MCF 10A (cell line): ENCODE measurements at regions of chr1 and their contacts with region 1.

Region 1: GRCh38 chr1:29202584-29203340 is 21.1 kb upstream of the SRSF4 start:
- DNase-seq: peak; percentile 98
- H3K4me3 Mint-ChIP-seq: no peak overlapping the region
- H3K27ac Mint-ChIP-seq: peak overlapping the region; percentile 46
- H3K4me1 Mint-ChIP-seq: peaks cover 7% of the 10 kb centered on the region
- H3K27me3 Mint-ChIP-seq: no peaks in the 10 kb centered on the region
- CTCF ChIP-seq: peak; percentile 85

Region 2: GRCh38 chr1:28886731-28887418 is 315.9 kb before region 1 on chr1:
- CTCF ChIA-PET with region 1: interaction called, 32 read pairs
- POLR2A ChIA-PET with region 1: interaction called, 5 read pairs
- intact Hi-C with region 1: loop called (anchors 1 kb)
- DNase-seq: peak; percentile 90
- H3K4me3 Mint-ChIP-seq: peak overlapping the region; percentile 95
- H3K27ac Mint-ChIP-seq: peak overlapping the region; percentile 89
- H3K4me1 Mint-ChIP-seq: peaks cover 40% of the 10 kb centered on the region
- H3K27me3 Mint-ChIP-seq: no peaks in the 10 kb centered on the region
- CTCF ChIP-seq: no peak

Region 3: GRCh38 chr1:29043274-29043965 is 159.3 kb before region 1 on chr1:
- CTCF ChIA-PET with region 1: interaction called, 10 read pairs
- POLR2A ChIA-PET with region 1: no interaction called
- intact Hi-C with region 1: no loop called
- DNase-seq: no peak
- H3K4me3 Mint-ChIP-seq: no peak overlapping the region
- H3K27ac Mint-ChIP-seq: peak overlapping the region; percentile 18
- H3K4me1 Mint-ChIP-seq: no peaks in the 10 kb centered on the region
- H3K27me3 Mint-ChIP-seq: no peaks in the 10 kb centered on the region
- CTCF ChIP-seq: no peak

Region 4: DNA sequence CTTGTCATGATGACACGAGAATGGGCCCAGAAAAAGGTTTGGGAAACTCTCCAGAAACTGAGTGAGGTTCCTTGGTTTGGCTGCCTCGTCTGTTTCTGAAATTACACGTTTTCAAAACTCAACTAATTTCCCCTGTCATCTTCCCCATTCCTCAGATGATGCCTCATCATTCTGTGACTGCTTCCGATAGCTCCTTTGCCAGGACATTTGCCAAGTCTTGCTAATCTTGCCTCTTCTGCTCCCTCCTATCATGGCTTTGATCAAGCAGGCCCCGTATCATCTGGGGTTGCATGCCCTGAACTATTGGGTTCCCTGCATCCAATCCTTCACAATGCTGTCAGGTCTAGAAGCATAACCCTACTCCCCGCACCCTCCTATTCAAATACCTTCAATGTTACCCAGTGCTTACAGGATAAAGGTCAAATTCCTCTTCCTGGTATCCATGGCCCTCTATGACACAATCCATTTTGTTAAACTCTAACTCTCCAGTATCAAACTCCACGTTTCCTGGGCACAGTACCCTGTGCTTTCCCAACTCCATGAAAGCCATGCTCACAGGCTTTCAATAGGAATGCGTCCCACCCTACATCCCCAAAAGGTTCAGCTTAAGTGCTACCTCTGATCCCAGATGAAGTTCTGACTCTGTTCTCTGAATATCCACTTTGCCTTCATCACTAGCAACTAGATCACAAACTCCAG is 56.9 kb before region 1 on chr1:
- CTCF ChIA-PET with region 1: no interaction called
- POLR2A ChIA-PET with region 1: no interaction called
- intact Hi-C with region 1: no loop called
- DNase-seq: peak; percentile 47
- H3K4me3 Mint-ChIP-seq: no peak overlapping the region
- H3K27ac Mint-ChIP-seq: no peak overlapping the region
- H3K4me1 Mint-ChIP-seq: no peaks in the 10 kb centered on the region
- H3K27me3 Mint-ChIP-seq: no peaks in the 10 kb centered on the region
- CTCF ChIP-seq: no peak

Region 5: DNA sequence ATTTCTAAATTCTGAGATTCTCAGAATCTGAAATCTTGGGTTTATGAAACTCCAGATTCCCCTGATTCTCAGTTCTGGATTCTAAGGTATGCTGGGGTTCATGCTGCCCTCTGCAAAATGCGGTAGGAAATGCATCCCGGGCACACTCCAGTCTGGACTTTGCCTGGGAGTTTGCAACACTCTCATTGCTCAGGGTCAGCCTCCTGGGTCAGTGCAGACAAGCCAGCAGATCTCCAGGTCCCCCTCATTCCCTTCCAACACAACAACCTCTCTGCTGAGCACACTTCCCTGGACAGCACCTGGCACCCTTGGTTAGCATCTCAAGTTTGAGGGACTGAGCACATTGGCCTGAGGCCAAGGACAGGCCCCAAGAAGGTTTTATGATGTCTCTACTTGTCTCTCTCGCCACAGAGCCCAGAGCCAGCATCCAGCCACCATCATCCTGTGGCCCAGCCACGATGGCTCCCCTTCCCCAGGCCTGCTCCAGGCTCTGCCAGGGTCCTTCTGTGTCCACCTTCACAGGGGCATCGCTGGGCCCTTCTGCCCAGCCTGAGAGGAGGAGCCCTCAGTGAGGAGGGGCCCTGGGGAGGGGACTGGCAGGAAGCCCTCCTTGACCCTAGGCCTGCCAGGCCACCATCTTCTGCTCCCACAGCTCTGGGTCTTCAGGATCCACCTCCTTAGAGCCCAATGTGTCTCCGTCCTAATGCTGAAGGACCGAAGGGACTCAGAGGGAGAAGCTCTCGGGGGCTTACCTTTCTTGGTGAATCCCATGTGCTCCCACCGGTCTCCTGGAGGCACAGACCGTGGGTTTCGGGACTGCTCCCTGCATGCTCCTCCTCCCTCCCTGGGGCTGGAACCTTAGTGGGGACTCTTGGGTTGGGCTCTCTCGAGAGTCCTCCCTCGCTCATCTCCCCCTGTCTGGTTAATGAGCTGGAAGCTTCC is 584.3 kb after region 1 on chr1:
- CTCF ChIA-PET with region 1: no interaction called
- POLR2A ChIA-PET with region 1: no interaction called
- intact Hi-C with region 1: no loop called
- DNase-seq: no peak
- H3K4me3 Mint-ChIP-seq: no peak overlapping the region
- H3K27ac Mint-ChIP-seq: no peak overlapping the region
- H3K4me1 Mint-ChIP-seq: peaks cover 5% of the 10 kb centered on the region
- H3K27me3 Mint-ChIP-seq: peaks cover 14% of the 10 kb centered on the region
- CTCF ChIP-seq: no peak